GM10248 (cell line): ENCODE measurements at regions of chr21 and their contacts with region 1.

Region 1: GRCh38 chr21:36966066-36966820 is at the start of gene HLCS:
- DNase-seq: peak; percentile 87
- CTCF ChIP-seq: peak; percentile 40

Region 2: GRCh38 chr21:36627242-36627641 is 339.0 kb before region 1 on chr21:
- CTCF ChIA-PET with region 1: no interaction called
- POLR2A ChIA-PET with region 1: no interaction called
- DNase-seq: no peak
- CTCF ChIP-seq: no peak

Region 3: GRCh38 chr21:36792505-36792967 is 173.7 kb before region 1 on chr21:
- CTCF ChIA-PET with region 1: no interaction called
- POLR2A ChIA-PET with region 1: no interaction called
- DNase-seq: peak; percentile 28
- CTCF ChIP-seq: no peak

Region 4: DNA sequence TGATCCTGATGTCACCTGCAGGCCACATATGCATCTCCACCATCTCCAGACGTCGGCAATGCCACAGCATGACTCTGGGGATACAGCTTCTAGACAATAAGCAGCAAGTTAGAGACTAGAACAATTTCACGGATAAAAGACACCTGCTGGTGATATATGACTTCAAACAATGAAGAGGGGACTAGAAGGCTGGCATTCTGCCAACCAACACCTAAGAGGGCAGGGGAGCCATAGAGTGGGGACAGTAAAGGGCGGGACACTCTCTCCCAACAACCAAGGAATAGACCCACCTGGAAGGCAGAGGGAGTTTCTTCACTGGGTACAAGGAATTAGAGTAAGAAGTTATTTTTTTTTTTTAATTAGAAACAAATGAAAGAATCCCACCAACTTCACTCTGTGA is 140.6 kb before region 1 on chr21:
- CTCF ChIA-PET with region 1: no interaction called
- POLR2A ChIA-PET with region 1: no interaction called
- DNase-seq: no peak
- CTCF ChIP-seq: no peak

Region 5: DNA sequence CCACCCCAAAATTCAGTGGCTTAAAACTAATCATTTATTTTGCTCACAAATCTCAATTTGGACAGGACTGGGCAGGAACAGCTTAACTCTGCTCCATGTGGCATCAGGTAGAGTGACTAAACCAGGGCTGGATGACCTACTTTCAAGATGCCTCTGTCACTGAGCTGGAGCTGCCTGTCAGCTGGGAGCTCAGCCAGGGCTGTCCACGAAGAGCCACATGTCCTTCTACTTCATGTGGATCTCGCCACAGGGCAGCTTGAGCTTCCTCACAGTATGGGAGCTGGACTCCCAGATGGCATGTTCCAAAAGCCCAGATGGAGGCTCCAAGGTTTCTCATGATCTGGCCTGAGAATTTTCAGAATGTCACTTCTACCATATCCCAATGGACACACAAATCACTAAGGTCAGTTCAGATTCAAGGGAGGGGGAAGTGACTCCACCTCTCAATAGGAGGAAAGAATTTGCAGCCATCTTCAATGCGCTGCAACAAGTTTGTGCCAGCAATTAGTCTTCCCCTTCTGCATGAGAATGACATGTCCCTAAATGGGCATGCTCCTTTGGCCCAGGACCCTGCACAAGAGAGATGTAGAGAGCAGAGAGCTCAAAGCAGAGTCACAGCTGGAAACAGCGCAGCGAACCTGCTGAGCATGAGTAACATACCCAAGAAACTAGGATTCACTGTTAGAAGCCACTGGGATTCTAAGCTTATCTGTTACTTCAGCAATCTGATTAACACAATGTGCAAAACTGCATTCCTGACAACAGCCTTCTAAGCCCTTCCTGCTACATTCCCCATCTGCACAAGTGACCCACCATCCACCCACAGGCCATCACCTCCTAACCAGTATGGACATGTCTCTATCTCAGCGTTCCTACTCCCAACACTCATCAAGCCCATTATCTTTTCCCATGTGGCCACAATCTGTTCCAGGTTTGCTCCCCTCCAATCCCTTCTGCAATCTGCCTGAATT is 16.8 kb before region 1 on chr21:
- CTCF ChIA-PET with region 1: interaction called, 17 read pairs
- POLR2A ChIA-PET with region 1: no interaction called
- DNase-seq: no peak
- CTCF ChIP-seq: no peak

Region 6: GRCh38 chr21:36976882-36977651 is 10.8 kb after region 1 on chr21:
- CTCF ChIA-PET with region 1: interaction called, 22 read pairs
- POLR2A ChIA-PET with region 1: no interaction called
- DNase-seq: peak; percentile 59
- CTCF ChIP-seq: peak; percentile 75

Region 7: DNA sequence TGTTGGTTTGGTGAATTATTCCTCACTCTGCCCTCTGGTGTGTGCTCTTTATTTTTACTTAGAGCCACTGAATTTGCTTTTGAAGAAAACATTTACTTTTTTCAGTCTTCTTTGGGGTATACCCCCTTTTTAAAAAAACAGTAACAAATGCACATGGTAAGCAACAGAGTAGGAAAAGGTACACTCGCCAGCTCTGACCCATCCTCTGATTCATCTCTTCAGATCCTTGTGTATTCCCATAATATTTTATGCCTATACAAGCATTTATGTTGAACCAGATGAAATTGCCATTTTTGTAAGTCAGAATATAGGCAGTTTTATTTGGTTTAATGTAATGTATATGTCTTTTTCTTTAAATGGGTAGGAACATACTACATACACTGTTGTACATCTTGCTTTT is 135.1 kb after region 1 on chr21:
- CTCF ChIA-PET with region 1: no interaction called
- POLR2A ChIA-PET with region 1: no interaction called
- DNase-seq: no peak
- CTCF ChIP-seq: no peak